ENCODE measurements at regions of chr11 and their contacts with region 1.

Region 1: DNA sequence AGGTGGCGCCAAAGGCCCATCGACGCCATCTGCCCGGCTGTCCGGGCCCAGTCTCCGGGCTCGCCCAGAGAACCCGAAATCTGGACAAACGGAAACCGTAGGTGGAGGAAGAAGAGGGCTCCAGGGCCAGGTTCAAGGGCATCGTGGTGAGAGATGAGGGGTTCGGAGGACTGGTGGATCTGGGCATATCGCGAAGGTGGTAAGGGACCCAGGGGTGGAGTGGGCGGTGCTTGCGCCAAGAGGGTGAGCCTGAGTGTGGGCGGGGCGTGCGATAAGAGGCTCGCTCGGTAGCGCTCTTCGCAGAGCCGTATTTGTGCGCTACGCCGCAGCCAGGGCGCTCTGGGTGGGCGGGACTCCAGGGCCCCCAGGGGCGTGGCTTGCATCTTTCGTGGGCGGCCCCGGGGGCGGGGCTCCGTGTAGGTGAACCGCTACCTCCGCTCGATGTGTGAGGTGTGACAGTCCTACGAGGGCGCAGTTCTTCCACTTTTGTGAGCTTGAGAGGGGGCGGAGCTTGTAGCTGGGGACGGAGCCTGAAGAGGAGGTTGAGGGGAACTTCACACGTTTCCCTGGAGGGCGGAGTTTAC is 4.8 kb downstream of the CD248 start:
- DNase-seq: peak; percentile 98
- ATAC-seq: peak; percentile 83
- H3K4me3 Mint-ChIP-seq: peak overlapping the region; percentile 79
- H3K27ac Mint-ChIP-seq: peak overlapping the region; percentile 91
- H3K4me1 Mint-ChIP-seq: peaks cover 33% of the 10 kb centered on the region
- H3K27me3 Mint-ChIP-seq: no peaks in the 10 kb centered on the region

Region 2: GRCh38 chr11:65900125-65900898 is 411.7 kb before region 1 on chr11 and contains the start of gene FOSL1:
- CTCF ChIA-PET with region 1: no interaction called
- POLR2A ChIA-PET with region 1: no interaction called
- intact Hi-C with region 1: loop called in 1 of 2 experiments (anchors 1 kb)
- DNase-seq: peak; percentile 98
- ATAC-seq: peak; percentile 85
- H3K4me3 Mint-ChIP-seq: peak within 1 kb of the TSS; percentile 75
- H3K27ac Mint-ChIP-seq: peak within 1 kb of the TSS; percentile 78
- H3K4me1 Mint-ChIP-seq: peaks cover 35% of the 10 kb centered on the region
- H3K27me3 Mint-ChIP-seq: peaks cover 4% of the 10 kb centered on the region
- total RNA-seq, gene FOSL1: 11.1 to 11.3 TPM

Region 3: GRCh38 chr11:66268283-66268951 is 43.6 kb before region 1 on chr11 and contains the start of gene RAB1B:
- CTCF ChIA-PET with region 1: interaction called, 4 read pairs
- POLR2A ChIA-PET with region 1: no interaction called
- intact Hi-C with region 1: loop called in 1 of 2 experiments (anchors 1 kb)
- DNase-seq: peak; percentile 100
- ATAC-seq: peak; percentile 88
- H3K4me3 Mint-ChIP-seq: peak within 1 kb of the TSS; percentile 100
- H3K27ac Mint-ChIP-seq: peak within 1 kb of the TSS; percentile 97
- H3K4me1 Mint-ChIP-seq: peaks cover 28% of the 10 kb centered on the region
- H3K27me3 Mint-ChIP-seq: no peaks in the 10 kb centered on the region
- total RNA-seq, gene RAB1B: 114 to 147 TPM

Region 4: GRCh38 chr11:66344550-66345315 is 32.7 kb after region 1 on chr11 and contains the start of gene BRMS1:
- CTCF ChIA-PET with region 1: interaction called, 12 read pairs
- POLR2A ChIA-PET with region 1: no interaction called
- intact Hi-C with region 1: loop called (anchors 1 kb)
- DNase-seq: peak; percentile 98
- ATAC-seq: peak; percentile 80
- H3K4me3 Mint-ChIP-seq: peak within 1 kb of the TSS; percentile 93
- H3K27ac Mint-ChIP-seq: peak within 1 kb of the TSS; percentile 90
- H3K4me1 Mint-ChIP-seq: peaks cover 45% of the 10 kb centered on the region
- H3K27me3 Mint-ChIP-seq: peaks cover 3% of the 10 kb centered on the region
- total RNA-seq, gene BRMS1: 29.2 to 30.2 TPM

Region 5: DNA sequence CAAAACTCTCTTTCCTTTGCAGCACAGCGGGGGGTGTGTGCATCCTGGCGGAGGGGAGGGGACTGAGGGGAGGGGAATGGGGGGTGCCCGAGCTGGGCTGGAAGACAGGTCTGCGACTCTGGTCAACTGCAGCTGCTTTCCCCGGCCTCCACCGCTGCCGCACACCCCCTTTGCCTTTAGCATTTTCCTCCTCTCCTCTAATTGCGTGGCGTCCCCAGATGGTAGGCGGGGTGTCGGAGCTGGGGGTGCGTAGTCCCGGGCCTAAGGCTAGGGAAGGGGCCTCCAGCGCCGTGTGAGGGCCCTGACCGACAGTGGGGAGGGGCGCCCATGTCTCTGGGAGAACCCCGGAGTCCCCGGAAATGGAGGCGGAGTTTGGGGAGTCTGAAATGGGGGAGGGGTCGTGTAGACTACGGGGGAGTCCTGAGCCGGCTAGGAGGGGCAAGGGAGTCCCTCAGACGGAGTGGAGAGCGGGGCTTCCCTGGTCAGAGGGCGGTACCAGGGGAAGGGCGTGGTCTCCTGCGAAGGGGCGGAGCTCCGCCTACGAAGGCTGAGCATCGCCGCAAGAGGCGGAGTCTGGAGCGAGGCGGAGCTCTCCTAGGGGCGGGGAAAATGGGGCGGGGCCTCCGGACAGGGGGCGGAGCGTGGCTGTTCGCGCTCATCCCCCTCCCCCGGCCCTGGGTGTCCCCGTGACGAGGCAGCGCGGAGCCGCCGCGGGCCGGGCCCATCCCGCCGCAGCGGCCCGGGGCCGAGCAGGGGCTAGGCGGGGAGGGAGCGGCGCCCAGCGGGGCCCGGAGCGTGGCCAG is 154.4 kb after region 1 on chr11 and contains the start of gene PELI3:
- CTCF ChIA-PET with region 1: no interaction called
- POLR2A ChIA-PET with region 1: interaction called, 3 read pairs
- intact Hi-C with region 1: loop called in 1 of 2 experiments (anchors 1 kb)
- DNase-seq: peak; percentile 98
- ATAC-seq: peak; percentile 88
- H3K4me3 Mint-ChIP-seq: peak within 1 kb of the TSS; percentile 85
- H3K27ac Mint-ChIP-seq: peak within 1 kb of the TSS; percentile 79
- H3K4me1 Mint-ChIP-seq: peaks cover 38% of the 10 kb centered on the region
- H3K27me3 Mint-ChIP-seq: no peaks in the 10 kb centered on the region
- total RNA-seq, gene PELI3: 5.7 to 7.0 TPM

Region 6: DNA sequence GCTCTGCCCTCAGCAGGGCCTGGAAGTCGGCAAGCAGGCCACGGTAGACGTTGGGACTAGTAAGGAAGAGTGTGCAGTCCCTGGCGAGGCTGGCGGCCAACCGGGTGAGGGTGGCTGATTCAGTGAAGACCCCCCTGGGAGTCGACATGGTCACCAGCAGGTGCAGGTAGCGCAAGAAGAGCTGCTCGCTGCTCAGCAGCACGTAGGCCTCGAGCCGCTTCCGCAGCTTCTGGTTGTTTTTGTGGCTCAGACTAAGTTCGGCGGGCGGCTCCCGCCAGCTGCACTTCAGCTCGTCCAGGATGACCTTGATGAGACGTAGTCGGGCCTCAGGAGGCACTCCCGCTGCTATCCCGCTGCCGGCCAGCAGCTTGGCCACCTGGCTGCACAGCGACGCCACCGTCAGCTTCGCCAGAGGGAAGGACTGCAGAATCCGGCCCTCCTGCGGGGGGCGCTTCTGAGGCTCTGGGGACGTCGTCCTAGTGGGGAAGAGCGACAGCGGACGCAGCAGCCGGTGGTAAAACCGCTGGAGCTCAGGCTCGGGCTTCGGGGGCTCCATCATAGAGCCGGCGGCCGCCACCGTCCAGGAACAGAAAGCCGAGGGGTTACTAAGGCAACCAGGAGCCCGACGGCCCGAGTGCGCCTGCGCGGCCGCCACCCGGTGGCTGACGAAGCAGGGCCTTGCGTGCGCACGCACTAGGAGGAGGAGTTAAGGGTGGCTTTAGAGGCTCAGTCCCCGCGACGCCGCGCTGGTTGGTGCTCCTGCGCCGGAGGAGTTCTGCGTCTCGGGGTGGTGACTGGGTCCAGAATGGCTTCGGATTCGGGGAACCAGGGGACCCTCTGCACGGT is 280.6 kb after region 1 on chr11 and contains the starts of genes CCDC87 and CCS:
- CTCF ChIA-PET with region 1: no interaction called
- POLR2A ChIA-PET with region 1: no interaction called
- intact Hi-C with region 1: loop called in 1 of 2 experiments (anchors 1 kb)
- DNase-seq: peak; percentile 99
- ATAC-seq: peak; percentile 100
- H3K4me3 Mint-ChIP-seq: peak within 1 kb of the TSS; percentile 93
- H3K27ac Mint-ChIP-seq: peak within 1 kb of the TSS; percentile 98
- H3K4me1 Mint-ChIP-seq: peaks cover 19% of the 10 kb centered on the region
- H3K27me3 Mint-ChIP-seq: no peaks in the 10 kb centered on the region
- total RNA-seq, gene CCDC87: 0.09 to 0.14 TPM
- total RNA-seq, gene CCS: 16.3 to 24.0 TPM

Region 7: DNA sequence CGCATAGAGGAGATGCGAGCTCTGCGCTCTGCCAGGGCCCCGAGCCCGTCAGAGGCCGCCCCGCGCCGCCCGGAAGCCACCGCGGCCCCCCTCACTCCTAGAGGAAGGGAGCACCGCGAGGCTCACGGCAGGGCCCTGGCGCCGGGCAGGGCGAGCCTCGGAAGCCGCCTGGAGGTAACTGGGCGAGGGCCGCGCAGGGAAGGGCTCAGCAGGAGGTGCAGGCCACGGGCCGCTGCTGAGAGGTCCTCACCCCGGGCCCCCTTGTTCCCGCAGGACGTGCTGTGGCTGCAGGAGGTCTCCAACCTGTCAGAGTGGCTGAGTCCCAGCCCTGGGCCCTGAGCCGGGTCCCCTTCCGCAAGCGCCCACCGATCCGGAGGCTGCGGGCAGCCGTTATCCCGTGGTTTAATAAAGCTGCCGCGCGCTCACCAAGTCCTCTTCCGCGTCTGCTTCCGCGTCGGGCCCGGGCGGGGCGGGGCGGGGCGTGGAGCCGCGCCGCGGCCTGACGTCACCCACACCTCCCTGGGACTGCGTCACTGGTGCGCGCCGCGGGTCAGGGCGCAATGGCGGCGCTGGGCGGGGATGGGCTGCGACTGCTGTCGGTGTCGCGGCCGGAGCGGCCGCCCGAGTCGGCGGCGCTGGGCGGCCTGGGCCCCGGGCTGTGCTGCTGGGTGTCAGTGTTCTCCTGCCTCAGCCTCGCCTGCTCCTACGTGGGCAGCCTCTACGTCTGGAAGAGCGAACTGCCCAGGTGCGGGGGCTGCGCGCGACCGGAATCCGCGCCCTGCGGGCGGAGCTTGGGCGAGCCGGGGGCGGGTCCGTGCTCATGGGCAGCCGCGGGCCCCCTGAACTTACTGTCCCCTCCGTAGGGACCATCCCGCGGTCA is 531.1 kb after region 1 on chr11 and contains the start of gene RCE1:
- CTCF ChIA-PET with region 1: no interaction called
- POLR2A ChIA-PET with region 1: no interaction called
- intact Hi-C with region 1: loop called in 1 of 2 experiments (anchors 1 kb)
- DNase-seq: peak; percentile 95
- ATAC-seq: peak; percentile 85
- H3K4me3 Mint-ChIP-seq: peak within 1 kb of the TSS; percentile 92
- H3K27ac Mint-ChIP-seq: peak within 1 kb of the TSS; percentile 92
- H3K4me1 Mint-ChIP-seq: peaks cover 51% of the 10 kb centered on the region
- H3K27me3 Mint-ChIP-seq: no peaks in the 10 kb centered on the region
- total RNA-seq, gene RCE1: 24.9 to 25.6 TPM

Measured in activated CD4-positive, alpha-beta T cell treated with anti-CD3 and anti-CD28 coated beads for 36 hours (primary cell).